WTC11 (cell line): ENCODE measurements at regions of chr6 and their contacts with region 1.

Region 1: DNA sequence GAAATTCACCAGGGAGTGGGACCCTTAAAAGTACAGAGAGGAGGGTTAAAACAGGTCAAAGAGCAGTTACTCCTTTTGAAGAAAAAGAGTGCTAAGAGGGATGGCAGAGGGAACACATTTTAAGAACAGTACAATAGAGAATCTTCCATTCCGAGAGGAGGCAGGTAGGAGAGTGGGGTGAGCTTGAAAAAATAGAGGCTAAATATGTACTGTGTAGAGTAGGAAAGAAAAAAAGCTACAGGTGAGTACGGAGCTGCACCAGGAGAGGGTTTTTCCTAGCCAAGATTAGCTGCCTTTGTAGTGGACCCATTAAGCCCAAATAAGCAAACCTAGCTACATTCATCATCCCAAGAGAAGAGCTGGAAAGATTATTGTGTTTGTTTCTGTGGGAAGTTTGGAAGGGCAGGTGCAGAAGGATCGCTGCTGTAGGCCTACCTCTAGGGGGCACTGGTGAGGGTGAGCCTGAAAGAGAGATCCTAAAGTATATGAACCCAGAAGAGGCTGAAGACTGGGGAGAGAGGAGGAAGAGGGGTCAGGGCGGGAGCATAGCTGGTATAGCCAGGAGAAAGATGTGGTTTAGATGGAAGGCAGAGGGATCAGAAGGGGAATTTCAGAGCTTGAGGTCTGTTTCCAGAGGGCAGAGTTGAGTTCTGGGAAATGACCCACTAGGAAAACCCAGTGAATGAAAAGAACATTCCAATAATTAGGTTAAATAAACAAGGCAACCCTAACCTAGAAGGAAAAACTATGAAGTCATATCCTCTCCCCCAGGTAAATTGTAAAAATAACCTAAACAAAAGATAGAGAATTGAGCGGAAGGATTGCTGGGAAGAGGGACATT is 50.2 kb upstream of the HINT3 start:
- DNase-seq: peak; percentile 80
- ATAC-seq: peak; percentile 98
- H3K4me3 Mint-ChIP-seq: no peak overlapping the region
- H3K27ac Mint-ChIP-seq: no peak overlapping the region
- H3K4me1 Mint-ChIP-seq: peaks cover 2% of the 10 kb centered on the region; the same call in 1 of the 2 replicates
- H3K27me3 Mint-ChIP-seq: no peaks in the 10 kb centered on the region; the same call in 1 of the 2 replicates
- CTCF ChIP-seq: peak; percentile 76

Region 2: GRCh38 chr6:125182237-125183008 is 724.0 kb before region 1 on chr6:
- CTCF ChIA-PET with region 1: no interaction called
- POLR2A ChIA-PET with region 1: no interaction called
- DNase-seq: no peak
- ATAC-seq: no peak
- H3K4me3 Mint-ChIP-seq: no peak overlapping the region
- H3K27ac Mint-ChIP-seq: no peak overlapping the region
- H3K4me1 Mint-ChIP-seq: peaks cover 4% of the 10 kb centered on the region; the same call in 1 of the 2 replicates
- H3K27me3 Mint-ChIP-seq: no peaks in the 10 kb centered on the region; the same call in 1 of the 2 replicates
- CTCF ChIP-seq: no peak

Region 3: DNA sequence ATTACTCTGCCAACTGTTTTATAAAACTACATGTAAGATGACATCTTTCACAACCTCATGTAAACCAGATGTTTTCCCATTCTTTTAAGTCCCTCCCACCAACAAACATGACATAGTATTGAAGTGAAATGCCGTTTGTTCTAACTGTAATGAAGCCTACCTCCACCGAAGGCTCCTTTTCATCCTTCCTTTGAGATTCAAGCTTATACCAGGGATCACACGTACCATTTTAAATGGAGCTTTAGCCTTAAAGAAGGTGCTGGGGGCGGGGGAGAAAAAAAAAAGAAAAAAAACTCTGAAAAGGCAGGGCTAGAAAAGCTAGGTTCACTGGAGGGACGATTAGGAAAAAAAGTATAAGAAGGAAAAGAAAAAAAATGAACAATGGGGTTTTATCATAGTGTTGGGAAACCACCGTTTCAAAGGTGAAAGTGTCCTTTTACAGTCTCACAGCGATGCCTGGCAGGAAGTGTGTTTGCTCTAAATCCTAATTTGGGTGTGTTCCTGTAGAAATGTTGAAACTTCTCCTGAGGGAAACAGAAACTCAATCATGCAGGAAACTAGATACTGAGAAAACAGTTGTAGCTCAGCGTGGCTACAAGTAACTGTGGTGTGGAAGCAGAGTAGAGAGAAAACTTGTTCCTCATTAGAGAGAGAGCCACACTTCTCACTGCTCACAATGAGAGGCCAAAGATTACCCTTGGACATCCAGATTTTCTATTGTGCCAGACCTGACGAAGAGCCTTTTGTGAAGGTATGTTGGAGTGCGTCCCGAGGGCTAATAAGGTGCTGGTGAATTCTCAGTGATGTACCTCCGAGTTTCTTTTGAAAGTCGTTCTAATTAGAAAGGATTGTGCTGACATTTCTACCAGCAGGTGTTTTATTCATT is 12.5 kb after region 1 on chr6:
- CTCF ChIA-PET with region 1: interaction called, 43 read pairs
- POLR2A ChIA-PET with region 1: no interaction called
- DNase-seq: no peak
- ATAC-seq: peak; percentile 27
- H3K4me3 Mint-ChIP-seq: no peak overlapping the region
- H3K27ac Mint-ChIP-seq: peak overlapping the region; percentile 46
- H3K4me1 Mint-ChIP-seq: peaks cover 24% of the 10 kb centered on the region
- H3K27me3 Mint-ChIP-seq: no peaks in the 10 kb centered on the region
- CTCF ChIP-seq: no peak

Region 4: GRCh38 chr6:126217497-126217896 is 311.1 kb after region 1 on chr6:
- CTCF ChIA-PET with region 1: no interaction called
- POLR2A ChIA-PET with region 1: no interaction called
- DNase-seq: no peak
- ATAC-seq: peak; percentile 34
- H3K4me3 Mint-ChIP-seq: no peak overlapping the region
- H3K27ac Mint-ChIP-seq: peak overlapping the region; percentile 67
- H3K4me1 Mint-ChIP-seq: peaks cover 6% of the 10 kb centered on the region
- H3K27me3 Mint-ChIP-seq: no peaks in the 10 kb centered on the region
- CTCF ChIP-seq: no peak